MCF 10A (cell line): ENCODE measurements at regions of chr3 and their contacts with region 1.

Region 1: GRCh38 chr3:151236316-151236715 is 33.3 kb upstream of the GPR171 start:
- DNase-seq: no peak
- H3K4me3 Mint-ChIP-seq: no peak overlapping the region
- H3K27ac Mint-ChIP-seq: no peak overlapping the region
- H3K4me1 Mint-ChIP-seq: no peaks in the 10 kb centered on the region
- H3K27me3 Mint-ChIP-seq: no peaks in the 10 kb centered on the region
- CTCF ChIP-seq: no peak

Region 2: DNA sequence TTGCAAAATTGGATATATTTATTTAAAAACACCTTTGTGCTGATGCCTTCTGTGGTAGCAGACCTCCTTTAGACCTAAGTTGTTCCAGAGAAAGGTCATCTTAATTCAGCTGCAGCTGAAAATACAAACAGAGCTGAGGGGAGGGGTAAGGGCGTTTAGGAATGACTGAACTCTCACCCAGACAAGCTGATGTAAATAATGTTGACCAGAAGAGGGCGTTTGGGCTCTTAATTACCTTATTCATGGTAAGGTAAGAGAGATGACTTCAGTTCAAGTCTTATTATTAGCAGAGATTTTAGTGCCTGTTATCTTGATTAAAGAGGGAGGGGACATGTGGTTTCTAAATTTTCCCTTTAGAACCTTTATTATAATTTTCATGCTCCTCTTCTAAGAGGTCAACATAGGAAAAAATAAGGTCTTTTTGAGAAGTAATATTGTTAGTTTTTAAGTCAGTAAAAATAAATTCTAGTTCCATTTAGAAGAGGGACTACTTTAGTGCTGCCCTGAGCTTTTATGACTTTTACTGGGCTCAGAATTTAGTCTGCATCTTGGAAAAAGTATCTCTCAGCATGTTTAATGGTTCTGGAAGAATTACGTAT is 79.6 kb before region 1 on chr3:
- CTCF ChIA-PET with region 1: interaction called, 12 read pairs
- POLR2A ChIA-PET with region 1: no interaction called
- intact Hi-C with region 1: no loop called
- DNase-seq: peak; percentile 75
- H3K4me3 Mint-ChIP-seq: no peak overlapping the region
- H3K27ac Mint-ChIP-seq: no peak overlapping the region
- H3K4me1 Mint-ChIP-seq: no peaks in the 10 kb centered on the region
- H3K27me3 Mint-ChIP-seq: no peaks in the 10 kb centered on the region
- CTCF ChIP-seq: peak; percentile 52